CD4-positive, alpha-beta memory T cell (primary cell): ENCODE measurements at regions of chr3 and their contacts with region 1.

Region 1: GRCh38 chr3:27827041-27827440 is 104.9 kb upstream of the EOMES start:
- DNase-seq: no peak
- H3K4me3 ChIP-seq: no peak overlapping the region
- H3K4me3 Mint-ChIP-seq: no peak overlapping the region
- H3K27ac ChIP-seq: no peak overlapping the region
- H3K27ac Mint-ChIP-seq: no peak overlapping the region
- H3K4me1 ChIP-seq: no peaks in the 10 kb centered on the region
- H3K4me1 Mint-ChIP-seq: peaks cover 4 to 11% (median 5%) of the 10 kb centered on the region in 4 donors
- H3K27me3 ChIP-seq: no peaks in the 10 kb centered on the region
- H3K27me3 Mint-ChIP-seq: no peaks in the 10 kb centered on the region

Region 2: GRCh38 chr3:27796365-27796875 is 30.6 kb before region 1 on chr3:
- CTCF ChIA-PET with region 1: no interaction called
- POLR2A ChIA-PET with region 1: no interaction called
- intact Hi-C with region 1: loop called (anchors 2 kb)
- DNase-seq: no peak
- H3K4me3 ChIP-seq: no peak overlapping the region
- H3K4me3 Mint-ChIP-seq: no peak overlapping the region
- H3K27ac ChIP-seq: no peak overlapping the region
- H3K27ac Mint-ChIP-seq: no peak overlapping the region
- H3K4me1 ChIP-seq: no peaks in the 10 kb centered on the region
- H3K4me1 Mint-ChIP-seq: peaks cover 0 to 4% (median 2%) of the 10 kb centered on the region in 4 donors
- H3K27me3 ChIP-seq: no peaks in the 10 kb centered on the region
- H3K27me3 Mint-ChIP-seq: no peaks in the 10 kb centered on the region

Region 3: GRCh38 chr3:28081533-28081947 is 254.5 kb after region 1 on chr3:
- CTCF ChIA-PET with region 1: no interaction called
- POLR2A ChIA-PET with region 1: no interaction called
- intact Hi-C with region 1: no loop called
- DNase-seq: no peak
- H3K4me3 ChIP-seq: no peak overlapping the region
- H3K4me3 Mint-ChIP-seq: no peak overlapping the region
- H3K27ac ChIP-seq: no peak overlapping the region
- H3K27ac Mint-ChIP-seq: no peak overlapping the region
- H3K4me1 ChIP-seq: no peaks in the 10 kb centered on the region
- H3K4me1 Mint-ChIP-seq: peaks cover 0 to 3% (median under 1%) of the 10 kb centered on the region in 4 donors
- H3K27me3 ChIP-seq: no peaks in the 10 kb centered on the region
- H3K27me3 Mint-ChIP-seq: peaks cover 0 to 1% of the 10 kb centered on the region in 2 donors